GM12878 (cell line): ENCODE measurements at regions of chr22 and their contacts with region 1.

Region 1: DNA sequence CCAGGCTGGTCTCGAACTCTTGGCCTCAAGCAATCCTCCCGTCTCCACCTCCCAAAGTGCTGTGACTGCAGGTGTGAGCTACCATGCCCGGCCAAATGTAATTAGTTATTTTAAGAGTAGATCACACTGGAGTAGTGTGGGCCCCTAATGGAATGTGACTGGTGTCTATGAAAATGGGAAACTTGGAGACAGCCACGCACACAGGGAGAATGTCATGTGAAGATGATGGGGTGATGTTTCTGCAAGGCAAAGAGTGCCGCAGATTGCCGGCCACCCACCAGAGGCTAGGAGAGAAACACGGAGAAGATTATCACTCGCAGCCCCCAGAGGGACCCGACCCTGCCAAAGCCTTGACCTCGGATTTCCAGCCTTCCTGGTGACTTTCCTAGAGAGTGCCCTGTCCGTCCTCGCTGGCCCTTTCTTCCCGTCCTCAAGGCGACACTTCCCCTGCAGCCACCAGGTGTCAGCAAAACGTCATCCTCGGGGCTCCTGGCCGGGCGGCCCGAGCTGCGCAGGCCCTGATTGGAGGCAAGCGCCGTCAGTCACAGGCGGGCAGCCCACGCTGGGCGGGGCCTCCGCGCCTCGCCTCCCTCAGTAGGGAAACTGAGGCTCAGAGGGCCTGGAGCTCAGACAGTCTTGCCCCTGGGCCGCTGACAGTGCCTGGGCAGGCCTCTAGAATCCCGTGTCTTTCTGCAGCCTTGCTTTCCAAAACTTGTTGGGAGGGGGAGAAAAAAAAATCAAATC is 16.3 kb downstream of the CRYBB2 start:
- DNase-seq: no peak
- ATAC-seq: peak; percentile 99
- H3K4me3 ChIP-seq: no peak overlapping the region
- H3K27ac ChIP-seq: no peak overlapping the region
- H3K4me1 ChIP-seq: no peaks in the 10 kb centered on the region
- H3K27me3 ChIP-seq: no peaks in the 10 kb centered on the region
- CTCF ChIP-seq: peak; percentile 75 to 93 (median 87)
- EP300 ChIP-seq: no peak
- POLR2A ChIP-seq: no peak
- RAD21 ChIP-seq: peak; percentile 83

Region 2: GRCh38 chr22:25219948-25220442 is 15.7 kb before region 1 on chr22:
- CTCF ChIA-PET with region 1: no interaction called
- POLR2A ChIA-PET with region 1: no interaction called
- RAD21 ChIA-PET with region 1: no interaction called
- SMC1A ChIA-PET with region 1: no interaction called
- in situ Hi-C with region 1: no loop called
- intact Hi-C with region 1: no loop called
- DNase-seq: no peak
- ATAC-seq: no peak
- H3K4me3 ChIP-seq: no peak overlapping the region
- H3K27ac ChIP-seq: no peak overlapping the region
- H3K4me1 ChIP-seq: no peaks in the 10 kb centered on the region
- H3K27me3 ChIP-seq: no peaks in the 10 kb centered on the region; a peak in 1 of 4 replicates
- CTCF ChIP-seq: no peak
- EP300 ChIP-seq: no peak
- POLR2A ChIP-seq: no peak
- RAD21 ChIP-seq: no peak

Region 3: DNA sequence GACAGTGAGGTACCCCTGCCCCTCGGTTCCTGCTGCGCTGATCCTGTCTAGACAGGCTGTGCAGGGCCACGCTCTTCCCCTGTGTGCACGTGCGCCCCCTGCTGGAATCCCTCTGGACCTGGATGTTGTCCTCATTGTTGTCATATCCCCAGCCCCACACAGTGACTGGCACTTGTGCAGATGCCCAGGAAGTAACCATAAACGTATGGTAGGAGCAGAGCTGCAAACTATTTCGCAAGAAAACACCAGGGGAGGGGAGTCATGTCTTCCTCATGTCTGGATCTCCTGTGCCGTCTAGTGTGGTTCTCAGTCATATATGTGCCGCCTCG is 98.4 kb after region 1 on chr22:
- CTCF ChIA-PET with region 1: interaction called, 24 read pairs
- POLR2A ChIA-PET with region 1: no interaction called
- RAD21 ChIA-PET with region 1: interaction called, 3 read pairs
- SMC1A ChIA-PET with region 1: interaction called, 3 read pairs
- in situ Hi-C with region 1: no loop called
- intact Hi-C with region 1: loop called (anchors 2 kb)
- DNase-seq: peak; percentile 0
- ATAC-seq: peak; percentile 97
- H3K4me3 ChIP-seq: no peak overlapping the region
- H3K27ac ChIP-seq: no peak overlapping the region
- H3K4me1 ChIP-seq: no peaks in the 10 kb centered on the region
- H3K27me3 ChIP-seq: no peaks in the 10 kb centered on the region
- CTCF ChIP-seq: peak; percentile 53 to 80 (median 64)
- EP300 ChIP-seq: no peak
- POLR2A ChIP-seq: no peak
- RAD21 ChIP-seq: peak; percentile 34; the same call in 1 of the 2 replicates

Region 4: DNA sequence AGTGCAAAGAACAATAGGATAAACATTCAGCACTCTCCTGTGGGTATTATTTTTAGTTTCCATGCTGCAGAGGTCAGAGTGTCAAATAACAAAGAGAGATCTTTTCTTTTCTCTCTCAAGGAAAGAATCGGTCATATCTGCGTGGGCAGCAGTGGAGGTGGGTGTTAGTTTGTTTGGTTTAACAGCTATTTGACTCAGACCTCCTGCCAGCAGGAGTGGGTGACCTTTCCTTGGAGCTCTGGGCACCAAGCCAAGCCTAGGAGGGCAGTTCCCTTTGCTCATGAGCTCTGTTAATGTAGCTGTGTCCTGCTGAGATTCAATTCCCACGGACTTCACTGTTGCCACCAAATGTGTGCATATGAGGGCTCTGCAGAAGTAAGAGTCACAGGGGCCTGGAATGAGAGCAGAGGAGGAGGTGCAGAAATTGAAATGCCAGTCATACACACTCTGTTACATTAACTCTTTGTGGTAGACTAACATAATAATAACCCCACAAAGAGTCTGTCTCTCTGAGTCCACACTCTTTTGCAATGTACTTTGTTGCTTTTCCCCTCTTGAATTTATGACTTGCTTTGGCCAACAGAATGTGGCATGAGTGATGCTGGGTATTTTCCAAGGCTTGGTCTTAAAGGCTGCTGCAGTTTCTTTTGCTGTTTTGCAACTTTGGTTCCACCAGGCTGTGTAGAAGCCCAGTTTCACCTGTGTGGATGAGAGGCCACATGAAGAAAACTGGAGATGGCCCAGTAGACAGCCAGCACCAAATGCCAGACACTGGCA is 252.7 kb after region 1 on chr22:
- CTCF ChIA-PET with region 1: no interaction called
- POLR2A ChIA-PET with region 1: no interaction called
- RAD21 ChIA-PET with region 1: no interaction called
- SMC1A ChIA-PET with region 1: no interaction called
- in situ Hi-C with region 1: no loop called
- intact Hi-C with region 1: no loop called
- DNase-seq: peak; percentile 26
- ATAC-seq: peak; percentile 21
- H3K4me3 ChIP-seq: no peak overlapping the region
- H3K27ac ChIP-seq: no peak overlapping the region
- H3K4me1 ChIP-seq: peaks cover 10% of the 10 kb centered on the region
- H3K27me3 ChIP-seq: no peaks in the 10 kb centered on the region
- CTCF ChIP-seq: no peak
- EP300 ChIP-seq: peak in 1 of 2 experiments; percentile 51; a peak in 2 of 4 replicates
- POLR2A ChIP-seq: no peak
- RAD21 ChIP-seq: no peak

Region 5: DNA sequence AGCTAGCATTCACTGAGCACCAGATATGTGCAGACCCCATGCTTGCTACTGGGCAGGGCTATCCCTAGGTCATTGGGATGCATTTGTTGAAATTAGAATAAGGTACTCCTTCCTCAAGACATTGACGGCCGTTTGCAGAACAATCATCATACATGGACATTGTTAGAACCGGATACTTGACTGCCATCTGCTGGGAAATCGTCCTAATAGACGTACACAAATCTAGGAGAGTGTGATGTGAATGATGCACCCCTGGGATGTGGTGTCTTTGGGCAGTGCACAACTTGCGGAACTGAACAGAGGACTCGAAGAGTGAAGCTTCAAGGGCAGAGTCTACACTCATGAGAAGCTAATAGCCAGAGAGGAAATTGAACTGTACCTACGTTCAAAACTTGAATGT is 542.2 kb after region 1 on chr22:
- CTCF ChIA-PET with region 1: no interaction called
- POLR2A ChIA-PET with region 1: no interaction called
- RAD21 ChIA-PET with region 1: no interaction called
- SMC1A ChIA-PET with region 1: no interaction called
- in situ Hi-C with region 1: loop called (anchors 10 kb)
- intact Hi-C with region 1: loop called (anchors 10 kb)
- DNase-seq: peak; percentile 11
- ATAC-seq: peak; percentile 70
- H3K4me3 ChIP-seq: no peak overlapping the region
- H3K27ac ChIP-seq: no peak overlapping the region
- H3K4me1 ChIP-seq: no peaks in the 10 kb centered on the region
- H3K27me3 ChIP-seq: no peaks in the 10 kb centered on the region
- CTCF ChIP-seq: peak; percentile 25 to 44 (median 44); a peak in 5 of 6 replicates
- EP300 ChIP-seq: no peak
- POLR2A ChIP-seq: no peak
- RAD21 ChIP-seq: peak; percentile 36; the same call in 1 of the 2 replicates